Panc1 (cell line): ENCODE measurements at regions of chr13 and their contacts with region 1.

Region 1: GRCh38 chr13:39616087-39616694 is 13.2 kb upstream of the LHFPL6 start:
- DNase-seq: no peak
- ATAC-seq: peak; percentile 78; the same call in 1 of the 2 replicates
- H3K4me3 ChIP-seq: no peak overlapping the region
- H3K27ac ChIP-seq: no peak overlapping the region
- H3K4me1 ChIP-seq: no peaks in the 10 kb centered on the region
- H3K27me3 ChIP-seq: no peaks in the 10 kb centered on the region
- CTCF ChIP-seq: peak; percentile 86

Region 2: GRCh38 chr13:39144941-39145533 is 471.2 kb before region 1 on chr13:
- CTCF ChIA-PET with region 1: interaction called, 3 read pairs
- POLR2A ChIA-PET with region 1: no interaction called
- in situ Hi-C with region 1: no loop called
- intact Hi-C with region 1: loop called (anchors 1 kb)
- DNase-seq: peak; percentile 24
- ATAC-seq: no peak
- H3K4me3 ChIP-seq: no peak overlapping the region
- H3K27ac ChIP-seq: no peak overlapping the region
- H3K4me1 ChIP-seq: no peaks in the 10 kb centered on the region; the same call in 1 of the 2 replicates
- H3K27me3 ChIP-seq: no peaks in the 10 kb centered on the region; the same call in none of the 2 replicates
- CTCF ChIP-seq: peak; percentile 74

Region 3: DNA sequence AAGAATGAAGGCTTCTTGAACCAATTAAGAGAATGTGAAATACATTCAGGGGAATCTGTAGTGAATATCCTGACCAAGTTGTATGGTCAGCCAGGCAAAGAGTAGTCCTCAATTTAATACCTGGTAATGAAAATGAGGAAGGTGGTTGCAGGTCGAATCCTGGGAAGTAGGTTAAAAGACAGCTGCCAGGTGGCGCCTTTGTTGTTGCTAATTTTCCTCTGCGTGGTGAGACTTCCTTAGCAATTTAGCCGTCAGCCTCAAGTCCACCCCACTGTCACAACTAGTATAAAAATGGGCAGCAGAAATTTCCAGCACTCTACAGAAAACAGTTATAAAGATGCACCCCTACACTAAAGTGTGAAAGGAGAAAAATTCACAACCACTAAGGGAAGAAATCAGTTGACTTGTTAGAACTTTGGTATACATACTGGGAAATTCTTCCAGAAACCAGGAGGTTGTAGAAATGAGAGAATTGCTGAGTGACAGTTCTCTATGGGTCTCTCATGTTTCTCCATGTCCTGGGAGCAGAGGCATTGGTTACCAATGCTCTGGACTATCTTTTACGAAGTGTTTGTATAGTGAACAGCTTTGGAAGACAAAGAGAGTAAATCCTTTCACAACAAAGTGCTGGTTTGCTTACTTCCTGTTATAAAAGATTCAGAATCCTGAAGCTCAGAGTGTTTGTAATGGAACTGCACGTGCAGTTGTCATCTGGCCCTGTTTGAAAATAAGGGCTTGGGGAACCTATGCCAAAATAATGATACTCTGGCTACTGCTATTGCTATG is 342.0 kb before region 1 on chr13:
- CTCF ChIA-PET with region 1: interaction called, 4 read pairs
- POLR2A ChIA-PET with region 1: no interaction called
- in situ Hi-C with region 1: no loop called
- intact Hi-C with region 1: loop called (anchors 5 kb)
- DNase-seq: no peak
- ATAC-seq: no peak
- H3K4me3 ChIP-seq: no peak overlapping the region
- H3K27ac ChIP-seq: no peak overlapping the region
- H3K4me1 ChIP-seq: no peaks in the 10 kb centered on the region
- H3K27me3 ChIP-seq: no peaks in the 10 kb centered on the region
- CTCF ChIP-seq: peak; percentile 44

Region 4: DNA sequence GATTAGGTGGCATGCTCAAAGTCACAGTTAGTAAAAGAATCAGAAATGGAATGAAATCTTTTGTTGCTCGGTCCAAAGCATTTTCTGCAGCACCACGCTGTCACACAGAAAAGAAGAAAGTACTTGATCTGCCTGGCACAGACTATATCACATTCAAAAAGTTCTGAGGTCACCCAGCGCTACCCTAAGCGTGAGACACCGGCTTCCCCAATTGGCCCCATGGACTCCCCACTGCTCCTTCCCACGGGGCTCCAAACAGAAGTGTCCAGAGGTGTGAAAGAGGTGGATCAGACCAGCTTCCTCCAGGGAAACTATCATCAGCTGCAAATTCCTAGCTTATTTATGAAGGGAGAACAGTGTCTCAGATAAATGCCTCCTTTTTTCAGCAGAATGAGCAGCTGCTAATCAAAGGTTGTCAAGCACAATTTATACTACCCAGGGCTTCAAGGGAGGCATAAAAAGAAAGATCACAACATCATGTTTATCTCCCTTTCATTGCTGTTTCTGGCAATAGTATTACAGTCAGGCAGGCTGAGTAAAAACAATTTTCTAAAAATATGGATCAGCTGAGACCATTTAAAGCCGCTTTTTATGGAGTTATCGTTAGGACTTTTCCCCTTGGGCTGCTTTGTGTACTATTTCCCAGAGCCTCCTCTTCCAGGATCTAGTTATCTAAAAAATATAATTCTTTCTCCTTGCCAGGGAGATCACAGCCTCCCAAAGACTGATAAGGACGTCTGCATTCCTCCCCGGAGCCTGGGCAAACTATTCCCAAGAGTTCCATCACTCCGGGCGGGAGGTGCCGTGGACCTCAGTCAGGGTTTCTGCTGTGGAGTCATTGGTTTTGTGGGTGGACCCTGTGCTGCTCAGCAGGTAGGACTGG is 221.2 kb before region 1 on chr13:
- CTCF ChIA-PET with region 1: no interaction called
- POLR2A ChIA-PET with region 1: no interaction called
- in situ Hi-C with region 1: no loop called
- intact Hi-C with region 1: no loop called
- DNase-seq: no peak
- ATAC-seq: no peak
- H3K4me3 ChIP-seq: no peak overlapping the region
- H3K27ac ChIP-seq: no peak overlapping the region
- H3K4me1 ChIP-seq: no peaks in the 10 kb centered on the region
- H3K27me3 ChIP-seq: no peaks in the 10 kb centered on the region
- CTCF ChIP-seq: no peak

Region 5: GRCh38 chr13:39415008-39415802 is 201.0 kb before region 1 on chr13:
- CTCF ChIA-PET with region 1: no interaction called
- POLR2A ChIA-PET with region 1: no interaction called
- in situ Hi-C with region 1: no loop called
- intact Hi-C with region 1: loop called (anchors 5 kb)
- DNase-seq: no peak
- ATAC-seq: no peak; the same call in 1 of the 2 replicates
- H3K4me3 ChIP-seq: no peak overlapping the region
- H3K27ac ChIP-seq: no peak overlapping the region
- H3K4me1 ChIP-seq: no peaks in the 10 kb centered on the region
- H3K27me3 ChIP-seq: no peaks in the 10 kb centered on the region
- CTCF ChIP-seq: peak; percentile 66

Region 6: DNA sequence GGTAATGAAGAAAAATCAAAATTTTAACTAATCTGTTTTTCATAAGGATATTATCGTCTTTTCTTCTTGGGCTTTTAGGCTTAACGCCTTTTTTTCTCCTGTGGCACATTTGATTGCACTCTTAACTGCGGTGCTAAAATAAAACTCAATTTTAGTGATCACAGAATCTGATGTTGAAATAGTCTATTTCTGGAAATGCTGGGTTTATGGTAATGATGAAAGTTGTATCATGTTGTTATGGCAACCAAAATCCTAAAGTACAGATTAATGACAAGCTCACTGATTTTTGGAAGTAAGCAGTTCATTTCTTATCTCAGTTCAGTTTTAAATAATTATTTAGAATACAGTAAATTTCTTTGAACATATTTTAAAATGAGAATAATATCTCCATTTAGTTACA is 124.6 kb after region 1 on chr13:
- CTCF ChIA-PET with region 1: no interaction called
- POLR2A ChIA-PET with region 1: no interaction called
- in situ Hi-C with region 1: no loop called
- intact Hi-C with region 1: no loop called
- DNase-seq: no peak
- ATAC-seq: no peak
- H3K4me3 ChIP-seq: no peak overlapping the region
- H3K27ac ChIP-seq: no peak overlapping the region
- H3K4me1 ChIP-seq: no peaks in the 10 kb centered on the region
- H3K27me3 ChIP-seq: no peaks in the 10 kb centered on the region
- CTCF ChIP-seq: no peak